GM10248 (cell line): ENCODE measurements at regions of chr2 and their contacts with region 1.

Region 1: GRCh38 chr2:12716282-12717190 is at the start of gene TRIB2:
- DNase-seq: peak; percentile 72
- CTCF ChIP-seq: peak; percentile 37

Region 2: GRCh38 chr2:12702305-12703121 is 14.0 kb before region 1 on chr2:
- CTCF ChIA-PET with region 1: interaction called, 10 read pairs
- POLR2A ChIA-PET with region 1: no interaction called
- DNase-seq: no peak
- CTCF ChIP-seq: no peak